ENCODE measurements at regions of chr2 and their contacts with region 1.

Region 1: DNA sequence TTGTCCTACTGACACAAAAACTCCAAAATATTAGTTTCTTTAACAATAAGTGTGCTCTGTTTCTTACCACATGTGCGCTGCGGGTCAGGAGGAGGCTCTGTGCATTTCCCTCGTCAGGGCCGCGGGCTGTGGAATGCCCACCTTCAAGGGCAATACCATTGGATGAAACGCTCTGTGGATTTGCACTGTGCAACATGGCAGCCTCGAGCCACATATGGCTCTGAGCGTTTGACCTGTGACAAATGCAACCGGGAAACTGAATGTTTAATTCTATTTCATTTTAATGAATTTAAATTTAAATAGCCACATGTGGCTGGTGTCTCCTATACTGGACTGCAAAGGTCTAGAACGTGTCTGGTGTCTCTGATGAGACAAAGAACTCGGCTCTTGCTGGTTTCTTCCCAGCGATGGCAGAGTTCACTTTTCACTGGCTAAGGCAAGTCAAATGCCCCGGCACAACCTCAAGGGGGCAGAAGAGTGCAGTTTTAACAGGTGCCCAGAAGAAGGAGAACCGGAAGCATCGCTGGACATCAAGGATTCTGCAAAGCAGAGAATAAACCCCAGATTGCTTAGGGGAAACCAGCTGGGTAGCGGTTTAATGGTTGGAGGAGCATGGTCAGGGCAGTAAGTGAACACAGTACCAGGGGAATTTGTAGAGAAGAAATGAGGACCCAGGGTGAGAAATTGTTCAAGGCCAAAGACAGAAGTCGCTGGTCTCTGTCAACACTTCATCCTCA is 37.0 kb upstream of the TMEM18 start:
- DNase-seq: peak; percentile 76
- CTCF ChIP-seq: peak; percentile 81

Region 2: DNA sequence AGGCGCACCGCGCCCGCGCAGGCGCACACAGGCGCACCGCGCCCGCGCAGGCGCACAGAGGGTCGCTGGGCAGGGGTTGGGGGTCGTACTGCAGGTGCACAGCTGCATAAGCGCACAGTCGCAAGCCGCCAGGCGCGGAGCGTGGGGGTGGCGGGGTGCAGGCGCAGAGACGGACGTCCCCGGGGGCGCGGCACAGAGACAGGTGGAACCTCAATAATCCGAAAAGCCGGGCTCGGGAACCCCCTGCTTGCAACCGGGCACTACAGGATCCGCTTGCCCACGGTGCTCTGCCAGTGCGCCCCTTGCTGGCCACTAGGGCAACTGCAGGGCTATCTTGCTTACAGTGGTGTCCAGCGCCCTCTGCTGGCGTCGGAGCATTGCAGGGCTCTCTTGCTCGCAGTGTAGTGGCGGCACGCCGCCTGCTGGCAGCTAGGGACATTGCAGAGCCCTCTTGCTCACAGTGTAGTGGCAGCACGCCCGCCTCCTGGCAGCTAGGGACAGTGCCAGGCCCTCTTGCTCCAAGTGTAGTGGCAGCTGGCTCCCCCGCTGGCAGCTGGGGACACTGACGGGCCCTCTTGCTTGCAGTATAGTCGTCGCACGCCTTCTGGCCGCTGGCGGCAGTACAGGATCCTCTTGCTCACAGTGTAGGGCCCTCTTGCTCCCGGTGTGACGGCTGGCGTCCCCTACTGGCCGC is 702.8 kb before region 1 on chr2:
- in situ Hi-C with region 1: no loop called
- DNase-seq: no peak
- CTCF ChIP-seq: peak; percentile 48

Region 3: DNA sequence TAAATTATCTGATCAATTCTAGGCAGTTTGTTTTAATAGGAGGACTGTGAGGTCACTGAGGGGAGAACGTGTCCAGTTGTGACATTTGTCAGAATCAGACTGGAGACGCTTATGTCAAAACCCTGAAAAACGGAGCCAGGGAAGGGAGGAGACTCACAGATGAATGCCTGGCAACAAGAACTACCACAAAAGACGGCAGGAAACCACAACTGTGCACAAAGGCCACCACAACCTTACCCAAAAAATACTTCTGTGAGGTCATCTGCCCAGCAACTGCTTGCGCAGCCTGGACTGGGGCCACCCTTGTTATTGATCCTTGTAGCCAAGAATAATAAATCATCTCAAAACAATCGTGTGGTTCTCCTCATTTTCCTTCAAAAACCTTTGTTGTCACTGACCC is 253.3 kb before region 1 on chr2:
- in situ Hi-C with region 1: no loop called
- DNase-seq: peak; percentile 58
- CTCF ChIP-seq: no peak

Region 4: GRCh38 chr2:584863-585823 is 129.0 kb before region 1 on chr2:
- in situ Hi-C with region 1: no loop called
- DNase-seq: peak; percentile 48
- CTCF ChIP-seq: no peak

Region 5: DNA sequence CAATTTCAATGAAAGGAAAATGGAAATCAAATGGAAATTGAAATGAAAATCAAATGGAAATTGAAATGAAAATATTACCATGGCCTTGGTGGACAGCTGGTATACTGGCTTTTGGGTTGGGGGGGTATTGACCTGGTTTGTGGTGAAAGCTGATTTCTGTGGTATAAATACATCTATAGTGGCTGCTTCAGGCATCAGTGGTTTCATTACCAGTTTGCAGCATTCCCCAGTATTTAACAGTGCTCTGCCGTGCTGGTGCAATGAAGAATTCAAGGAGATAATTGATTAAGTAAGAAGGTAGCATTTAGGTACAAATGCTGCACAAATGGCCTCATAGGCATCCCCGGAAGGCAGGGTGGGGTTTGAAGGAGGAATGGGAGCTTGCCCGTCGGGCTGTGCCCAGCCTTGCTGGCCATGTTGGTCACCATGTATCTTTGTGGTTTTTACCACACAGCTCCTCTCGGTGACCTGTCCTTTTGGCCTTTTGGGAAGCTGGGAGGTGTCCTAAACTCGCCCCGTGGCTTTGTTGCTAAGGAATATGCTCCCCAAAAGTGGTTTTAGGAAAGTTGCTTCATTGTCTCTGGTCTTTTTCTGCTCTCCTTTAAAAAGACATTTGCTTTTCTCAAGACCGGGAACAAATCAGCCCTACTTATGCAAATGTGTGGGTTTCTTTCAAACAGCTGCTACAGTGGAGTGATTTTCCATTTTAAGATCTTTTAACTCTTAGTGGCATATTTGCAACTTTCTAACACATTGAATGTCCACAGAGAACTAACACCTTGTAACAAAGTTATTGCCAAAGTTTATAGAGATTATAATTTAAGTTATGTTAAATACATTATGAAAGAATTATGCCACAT is 265.1 kb after region 1 on chr2:
- in situ Hi-C with region 1: no loop called
- DNase-seq: no peak
- CTCF ChIP-seq: no peak

Region 6: DNA sequence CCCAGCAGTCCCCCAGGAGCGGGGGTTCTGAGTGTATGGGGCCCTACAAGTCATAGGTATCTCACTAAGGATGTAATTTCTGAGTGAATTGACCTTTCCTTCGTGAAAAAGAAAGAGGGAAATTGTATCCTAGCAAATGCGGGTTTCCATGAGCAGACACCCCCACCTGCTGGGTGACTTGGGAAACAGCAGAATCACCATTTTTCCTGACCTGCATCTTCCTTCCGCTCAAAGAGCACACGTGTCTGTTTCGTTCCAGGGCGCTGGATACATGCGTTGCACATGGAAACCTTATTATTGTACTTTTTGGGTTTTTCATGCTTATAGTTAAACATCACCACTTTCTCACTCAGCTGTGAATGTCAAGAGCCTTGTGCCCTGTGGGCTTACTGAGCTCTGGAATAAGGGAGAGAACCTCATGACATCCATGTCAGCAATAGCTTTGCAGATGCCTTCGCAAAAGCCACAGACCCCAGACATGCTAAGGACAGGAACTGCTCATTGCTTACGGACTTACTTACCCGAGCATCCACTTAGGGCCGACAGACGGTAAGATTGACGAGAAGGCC is 831.9 kb after region 1 on chr2:
- in situ Hi-C with region 1: loop called (anchors 25 kb)
- DNase-seq: peak; percentile 54
- CTCF ChIP-seq: peak; percentile 63

Measured in GM13977 (cell line).